ENCODE measurements at regions of chr4 and their contacts with region 1.

Region 1: GRCh38 chr4:157045507-157046127 is 30.3 kb upstream of the GLRB start:
- DNase-seq: peak; percentile 66
- H3K4me3 ChIP-seq: no peak overlapping the region
- H3K27ac ChIP-seq: no peak overlapping the region
- H3K4me1 ChIP-seq: peaks cover 3% of the 10 kb centered on the region
- H3K27me3 ChIP-seq: no peaks in the 10 kb centered on the region
- CTCF ChIP-seq: peak; percentile 93

Region 2: GRCh38 chr4:156594624-156595023 is 451.0 kb before region 1 on chr4:
- CTCF ChIA-PET with region 1: no interaction called
- dilution Hi-C with region 1: no loop called
- in situ Hi-C with region 1: no loop called
- intact Hi-C with region 1: loop called (anchors 5 kb)
- DNase-seq: peak; percentile 24
- H3K4me3 ChIP-seq: no peak overlapping the region
- H3K27ac ChIP-seq: no peak overlapping the region
- H3K4me1 ChIP-seq: peaks cover 6% of the 10 kb centered on the region
- H3K27me3 ChIP-seq: no peaks in the 10 kb centered on the region
- CTCF ChIP-seq: no peak

Region 3: DNA sequence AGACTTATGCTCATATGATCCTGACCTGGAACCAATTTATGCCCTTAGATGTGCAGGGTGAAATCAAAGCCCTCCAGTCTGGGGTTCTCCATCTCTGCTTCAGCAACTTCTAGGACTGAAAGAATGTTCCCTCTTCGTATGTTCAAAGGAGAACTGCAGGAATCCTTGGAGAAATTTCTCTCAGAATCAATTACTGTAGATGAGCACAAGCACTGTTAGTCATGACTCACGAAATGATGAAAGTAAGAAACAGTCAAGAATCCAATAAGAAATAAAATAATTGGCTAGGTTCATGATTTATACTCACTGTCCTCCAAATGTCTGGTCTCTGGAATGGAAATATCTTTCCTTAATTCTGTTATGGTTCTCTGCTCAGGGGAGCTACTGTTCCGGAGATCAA is 422.2 kb before region 1 on chr4:
- CTCF ChIA-PET with region 1: no interaction called
- dilution Hi-C with region 1: no loop called
- in situ Hi-C with region 1: no loop called
- intact Hi-C with region 1: no loop called
- DNase-seq: no peak
- H3K4me3 ChIP-seq: no peak overlapping the region
- H3K27ac ChIP-seq: no peak overlapping the region
- H3K4me1 ChIP-seq: no peaks in the 10 kb centered on the region
- H3K27me3 ChIP-seq: no peaks in the 10 kb centered on the region
- CTCF ChIP-seq: no peak

Region 4: DNA sequence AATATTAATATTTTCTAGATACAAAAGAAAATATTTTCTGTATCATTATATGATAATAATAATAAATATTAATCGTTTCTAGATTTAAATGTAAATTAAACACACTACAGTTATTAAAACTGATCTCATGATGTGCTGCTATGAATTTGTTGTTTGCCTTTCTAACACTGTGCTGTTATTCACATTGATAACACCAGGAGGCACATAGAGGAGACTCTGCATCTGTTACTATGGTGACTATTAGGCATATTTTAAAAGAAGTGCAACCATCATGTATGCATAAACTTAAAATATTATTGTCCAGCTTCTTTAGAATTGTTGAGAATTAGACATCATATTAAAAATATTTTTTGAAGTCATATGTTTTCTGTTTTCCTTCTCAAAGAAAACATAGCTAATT is 62.3 kb before region 1 on chr4:
- CTCF ChIA-PET with region 1: no interaction called
- dilution Hi-C with region 1: no loop called
- in situ Hi-C with region 1: loop called in 1 of 2 experiments (anchors 10 kb)
- intact Hi-C with region 1: loop called (anchors 1 kb)
- DNase-seq: no peak
- H3K4me3 ChIP-seq: no peak overlapping the region
- H3K27ac ChIP-seq: no peak overlapping the region
- H3K4me1 ChIP-seq: no peaks in the 10 kb centered on the region
- H3K27me3 ChIP-seq: no peaks in the 10 kb centered on the region
- CTCF ChIP-seq: peak; percentile 53 to 60

Region 5: DNA sequence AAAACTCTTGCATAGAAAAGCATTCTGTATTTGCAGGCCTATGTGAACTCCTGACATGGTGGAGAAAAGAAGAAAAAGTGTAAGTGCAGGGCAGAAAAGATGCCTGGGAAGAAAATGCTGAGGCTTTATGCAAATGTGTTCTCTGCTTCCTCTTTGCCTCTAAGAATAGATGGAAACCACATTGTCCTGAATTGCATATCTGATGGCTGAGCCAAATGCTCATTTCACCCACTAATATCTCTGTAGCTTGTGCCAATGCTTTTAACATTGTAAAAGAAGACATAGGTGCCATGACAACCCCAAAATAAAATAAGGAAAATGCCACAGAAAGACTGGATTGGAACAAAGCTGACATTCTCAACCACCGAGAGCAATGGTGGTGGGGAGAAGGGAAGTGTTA is 482.3 kb after region 1 on chr4:
- CTCF ChIA-PET with region 1: no interaction called
- dilution Hi-C with region 1: no loop called
- in situ Hi-C with region 1: no loop called
- intact Hi-C with region 1: no loop called
- DNase-seq: no peak
- H3K4me3 ChIP-seq: no peak overlapping the region
- H3K27ac ChIP-seq: no peak overlapping the region
- H3K4me1 ChIP-seq: no peaks in the 10 kb centered on the region
- H3K27me3 ChIP-seq: no peaks in the 10 kb centered on the region
- CTCF ChIP-seq: no peak

Region 6: GRCh38 chr4:157978680-157979361 is 933.2 kb after region 1 on chr4:
- CTCF ChIA-PET with region 1: no interaction called
- dilution Hi-C with region 1: no loop called
- in situ Hi-C with region 1: no loop called
- intact Hi-C with region 1: loop called (anchors 10 kb)
- DNase-seq: peak; percentile 44
- H3K4me3 ChIP-seq: no peak overlapping the region
- H3K27ac ChIP-seq: no peak overlapping the region
- H3K4me1 ChIP-seq: no peaks in the 10 kb centered on the region
- H3K27me3 ChIP-seq: peaks cover 2% of the 10 kb centered on the region
- CTCF ChIP-seq: peak; percentile 81 to 85